ENCODE measurements at regions of chr3 and their contacts with region 1.

Region 1: DNA sequence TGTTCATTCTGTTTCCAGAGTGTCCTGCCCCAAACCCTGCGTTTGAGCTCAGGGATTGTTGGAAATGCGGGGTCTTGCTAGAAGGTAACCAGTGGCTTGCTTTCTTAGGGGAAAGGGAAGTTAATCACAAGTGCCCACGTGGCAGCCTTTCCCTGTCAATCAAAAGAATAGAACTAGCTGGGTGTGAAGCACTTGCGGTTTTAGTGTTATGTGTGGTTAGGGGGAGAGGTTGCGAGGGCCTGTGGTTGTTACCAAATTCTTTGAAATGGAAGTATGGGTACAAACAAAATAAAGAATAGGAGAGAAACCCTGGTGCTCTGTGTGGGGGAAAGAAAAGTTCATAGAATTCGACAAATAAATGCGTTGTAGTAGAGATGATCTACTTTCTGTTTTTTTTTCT is 67.6 kb downstream of the FNDC3B start:
- DNase-seq: peak; percentile 91
- H3K4me3 Mint-ChIP-seq: peak overlapping the region; percentile 84
- H3K27ac Mint-ChIP-seq: peak overlapping the region; percentile 89
- H3K4me1 Mint-ChIP-seq: peaks cover 64% of the 10 kb centered on the region
- H3K27me3 Mint-ChIP-seq: peaks cover 4% of the 10 kb centered on the region

Region 2: DNA sequence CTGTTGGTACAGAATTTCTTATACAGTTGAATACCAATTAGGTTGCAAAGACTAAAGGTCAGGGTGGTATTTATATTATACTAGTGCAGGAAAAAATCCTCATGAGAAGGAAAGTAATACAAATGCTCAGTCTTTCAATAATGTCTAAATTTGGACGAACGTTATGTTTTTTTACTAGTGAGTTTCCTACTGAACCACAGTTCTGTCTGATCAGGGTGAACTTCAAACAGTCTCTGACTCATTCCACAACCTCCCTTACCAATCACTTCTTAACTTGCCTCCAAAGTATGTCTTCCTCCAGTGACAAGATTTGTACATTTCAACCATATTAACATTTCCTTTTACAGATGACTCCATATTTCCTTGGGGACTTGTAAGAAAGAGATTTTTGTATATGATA is 260.4 kb before region 1 on chr3:
- intact Hi-C with region 1: loop called (anchors 2 kb)
- DNase-seq: peak; percentile 76
- H3K4me3 Mint-ChIP-seq: no peak overlapping the region
- H3K27ac Mint-ChIP-seq: peak overlapping the region; percentile 17
- H3K4me1 Mint-ChIP-seq: peaks cover 17% of the 10 kb centered on the region
- H3K27me3 Mint-ChIP-seq: peaks cover 15% of the 10 kb centered on the region

Region 3: GRCh38 chr3:172039436-172040077 is 67.4 kb before region 1 on chr3 and contains the start of gene FNDC3B:
- intact Hi-C with region 1: loop called (anchors 1 kb)
- DNase-seq: peak; percentile 98
- H3K4me3 Mint-ChIP-seq: peak within 1 kb of the TSS; percentile 87
- H3K27ac Mint-ChIP-seq: peak within 1 kb of the TSS; percentile 95
- H3K4me1 Mint-ChIP-seq: peaks cover 17% of the 10 kb centered on the region
- H3K27me3 Mint-ChIP-seq: peaks cover 3% of the 10 kb centered on the region
- total RNA-seq, gene FNDC3B: 19.6 and 19.9 TPM in 2 replicates

Region 4: DNA sequence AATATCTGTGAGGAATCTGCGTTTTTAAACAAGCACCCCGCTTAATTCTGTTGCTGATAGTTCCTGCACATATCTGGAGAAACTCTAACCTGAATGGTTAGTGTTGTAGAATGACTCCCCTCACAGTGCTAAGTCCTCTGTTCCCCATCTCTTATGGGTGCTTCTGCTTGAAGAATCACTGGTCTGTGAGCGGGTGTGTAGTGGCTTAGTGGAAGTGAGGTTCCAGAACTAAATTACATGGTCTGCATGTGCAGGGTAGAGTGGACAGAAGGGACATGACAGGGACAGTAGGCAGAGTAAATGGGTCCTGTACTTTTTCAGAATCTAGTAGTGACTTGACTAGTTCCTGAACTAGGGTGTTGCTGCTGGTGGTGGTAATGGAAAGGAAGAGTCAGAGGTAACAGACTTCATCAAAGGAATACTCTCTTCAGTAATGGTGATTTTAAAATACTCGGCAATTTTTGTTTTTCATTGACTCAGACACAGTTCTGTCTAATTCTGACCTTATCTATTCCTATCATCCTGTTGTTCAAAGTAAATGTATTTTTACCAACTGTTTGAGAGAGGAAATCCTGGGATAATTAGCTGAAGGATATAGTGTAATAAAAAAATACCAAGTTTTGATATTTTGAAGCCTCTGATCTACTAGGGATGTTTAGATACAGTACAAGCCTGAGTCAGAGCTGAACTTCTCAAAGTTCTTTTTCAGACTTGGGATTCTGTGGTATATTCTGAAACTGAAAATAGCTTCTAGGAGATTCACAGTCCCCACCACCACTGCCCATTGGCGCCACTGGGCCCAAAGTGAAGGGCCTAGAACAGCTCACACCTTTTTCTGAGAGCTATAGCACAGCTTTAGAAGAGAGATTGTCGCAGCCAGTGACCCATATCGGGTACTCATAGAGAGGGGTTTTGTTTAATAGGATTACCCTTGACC is 12.1 kb before region 1 on chr3:
- intact Hi-C with region 1: loop called (anchors 1 kb)
- DNase-seq: peak; percentile 79
- H3K4me3 Mint-ChIP-seq: peak overlapping the region; percentile 1
- H3K27ac Mint-ChIP-seq: peak overlapping the region; percentile 40
- H3K4me1 Mint-ChIP-seq: peaks cover 44% of the 10 kb centered on the region
- H3K27me3 Mint-ChIP-seq: no peaks in the 10 kb centered on the region

Region 5: GRCh38 chr3:172138795-172139441 is 31.9 kb after region 1 on chr3:
- intact Hi-C with region 1: loop called (anchors 1 kb)
- DNase-seq: peak; percentile 74
- H3K4me3 Mint-ChIP-seq: peak overlapping the region; percentile 26
- H3K27ac Mint-ChIP-seq: peak overlapping the region; percentile 67
- H3K4me1 Mint-ChIP-seq: peaks cover 47% of the 10 kb centered on the region
- H3K27me3 Mint-ChIP-seq: no peaks in the 10 kb centered on the region

Region 6: GRCh38 chr3:172580680-172581401 is 473.9 kb after region 1 on chr3:
- intact Hi-C with region 1: loop called (anchors 5 kb)
- DNase-seq: peak; percentile 67
- H3K4me3 Mint-ChIP-seq: peak overlapping the region; percentile 74
- H3K27ac Mint-ChIP-seq: peak overlapping the region; percentile 91
- H3K4me1 Mint-ChIP-seq: peaks cover 91% of the 10 kb centered on the region
- H3K27me3 Mint-ChIP-seq: no peaks in the 10 kb centered on the region

Measured in activated CD4-positive, alpha-beta T cell treated with anti-CD3 and anti-CD28 coated beads, Interleukin-2, amount 10 ng/mL, durations not matched to agents 24 days and 14 days (primary cell).